A673 (cell line): ENCODE measurements at regions of chr2 and their contacts with region 1.

Region 1: GRCh38 chr2:72007402-72007801 is 140.3 kb downstream of the CYP26B1 start:
- DNase-seq: no peak
- H3K4me3 ChIP-seq: no peak overlapping the region
- H3K27ac ChIP-seq: no peak overlapping the region
- H3K4me1 ChIP-seq: no peaks in the 10 kb centered on the region
- H3K27me3 ChIP-seq: no peaks in the 10 kb centered on the region
- CTCF ChIP-seq: no peak

Region 2: DNA sequence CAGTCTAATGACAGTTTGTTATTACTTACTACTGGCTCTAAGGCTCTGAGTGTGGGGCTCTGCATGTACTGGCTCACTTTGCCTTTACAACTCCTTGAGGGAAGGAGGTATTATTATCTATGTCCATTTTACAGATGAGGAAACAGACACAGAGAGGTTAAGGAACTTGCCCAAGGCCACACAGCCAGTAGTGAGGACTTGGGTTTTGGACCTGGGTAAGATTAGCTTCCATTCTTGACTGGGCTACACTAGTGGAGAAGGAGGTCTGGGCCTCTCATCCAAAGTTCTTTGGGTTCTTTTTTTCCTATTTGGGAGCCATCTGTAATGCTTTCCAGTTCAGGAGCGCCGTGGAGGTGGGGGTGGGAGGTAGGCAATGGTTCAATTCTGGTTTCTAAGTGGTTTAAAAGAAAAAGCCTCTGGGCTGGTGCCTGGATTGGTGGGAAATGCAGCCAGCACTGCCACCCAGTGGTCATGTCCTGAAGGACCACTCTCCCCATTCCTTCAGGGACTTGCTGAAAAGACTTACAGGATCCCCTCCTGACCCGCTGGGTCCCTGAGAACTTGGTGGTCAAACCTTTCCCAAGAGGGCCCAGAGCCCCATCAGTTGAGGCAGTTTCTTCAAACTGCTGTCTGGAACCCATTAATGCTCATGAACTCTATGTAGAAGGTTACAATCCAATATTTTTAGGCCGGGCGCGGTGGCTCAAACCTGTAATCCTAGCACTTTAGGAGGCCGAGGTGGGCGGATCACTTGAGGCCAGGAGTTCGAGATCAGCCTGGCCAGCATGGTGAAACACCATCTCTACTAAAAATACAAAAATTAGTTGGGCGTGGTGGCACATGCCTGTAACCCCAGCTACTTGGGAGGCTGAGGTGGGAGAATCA is 1156.3 kb after region 1 on chr2:
- CTCF ChIA-PET with region 1: interaction called, 13 read pairs
- POLR2A ChIA-PET with region 1: no interaction called
- intact Hi-C with region 1: no loop called
- DNase-seq: peak; percentile 79
- H3K4me3 ChIP-seq: no peak overlapping the region
- H3K27ac ChIP-seq: no peak overlapping the region
- H3K4me1 ChIP-seq: no peaks in the 10 kb centered on the region
- H3K27me3 ChIP-seq: no peaks in the 10 kb centered on the region
- CTCF ChIP-seq: peak; percentile 88